ENCODE measurements at regions of chr1 and their contacts with region 1.

Region 1: DNA sequence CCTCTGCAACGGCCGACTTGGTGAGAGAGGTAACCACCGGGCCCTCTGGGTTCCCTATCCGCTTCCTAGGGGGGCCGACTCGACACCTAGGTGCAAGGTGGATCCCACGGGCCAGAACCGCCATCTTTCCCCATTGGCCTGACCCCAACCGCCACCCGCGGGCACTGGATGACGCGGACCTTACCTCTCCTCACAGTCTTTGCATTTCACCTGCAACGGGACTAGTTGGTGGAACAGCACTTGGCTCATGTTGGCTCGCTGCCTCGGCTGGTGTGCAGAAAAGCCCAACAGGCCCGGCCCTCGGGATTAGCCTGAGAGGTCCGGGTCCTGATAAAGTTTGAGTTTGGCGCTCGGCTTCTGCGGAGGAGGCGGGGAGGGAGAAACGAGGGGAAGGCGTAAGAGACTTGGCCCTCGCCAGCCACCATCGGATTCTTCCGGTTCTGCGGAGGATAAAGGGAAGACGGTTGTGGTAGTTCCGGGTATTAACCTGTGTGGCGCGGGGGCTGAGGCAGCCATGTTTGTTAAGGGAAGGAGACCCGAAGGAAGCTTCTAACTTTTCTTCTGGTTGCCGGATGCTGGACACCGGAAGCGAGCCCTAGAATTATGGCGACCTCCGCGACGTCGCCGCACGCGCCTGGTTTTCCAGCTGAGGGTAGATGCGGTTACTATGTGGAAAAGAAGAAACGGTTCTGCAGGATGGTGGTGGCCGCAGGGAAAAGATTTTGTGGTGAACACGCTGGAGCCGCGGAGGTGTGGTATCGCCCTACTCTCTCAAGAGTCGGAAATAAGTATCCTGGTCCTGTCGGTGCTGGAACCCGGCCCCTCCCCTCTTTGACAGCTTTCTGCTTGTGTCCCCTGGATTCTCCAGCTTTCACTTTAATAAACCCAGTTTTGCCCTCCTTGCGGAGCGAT is at the starts of genes SASS6 and TRMT13:
- DNase-seq: peak; percentile 73 to 96 (median 94)
- ATAC-seq: peak; percentile 99
- H3K4me3 ChIP-seq: peak within 1 kb of the TSS; percentile 92
- H3K4me3 Mint-ChIP-seq: peak within 1 kb of the TSS; percentile 90 to 99 (median 98)
- H3K27ac ChIP-seq: peak within 1 kb of the TSS; percentile 74
- H3K27ac Mint-ChIP-seq: peak within 1 kb of the TSS; percentile 86 to 99 (median 96)
- H3K4me1 ChIP-seq: peaks cover 9 to 15% of the 10 kb centered on the region in 2 donors
- H3K4me1 Mint-ChIP-seq: peaks cover 7 to 53% (median 39%) of the 10 kb centered on the region in 7 donors
- H3K27me3 ChIP-seq: no peaks in the 10 kb centered on the region
- H3K27me3 Mint-ChIP-seq: no peaks in the 10 kb centered on the region
- total RNA-seq, gene SASS6: 2.5 to 11.6 (median 5.6) TPM
- total RNA-seq, gene TRMT13: 15.3 to 60.3 (median 23.9) TPM

Region 2: DNA sequence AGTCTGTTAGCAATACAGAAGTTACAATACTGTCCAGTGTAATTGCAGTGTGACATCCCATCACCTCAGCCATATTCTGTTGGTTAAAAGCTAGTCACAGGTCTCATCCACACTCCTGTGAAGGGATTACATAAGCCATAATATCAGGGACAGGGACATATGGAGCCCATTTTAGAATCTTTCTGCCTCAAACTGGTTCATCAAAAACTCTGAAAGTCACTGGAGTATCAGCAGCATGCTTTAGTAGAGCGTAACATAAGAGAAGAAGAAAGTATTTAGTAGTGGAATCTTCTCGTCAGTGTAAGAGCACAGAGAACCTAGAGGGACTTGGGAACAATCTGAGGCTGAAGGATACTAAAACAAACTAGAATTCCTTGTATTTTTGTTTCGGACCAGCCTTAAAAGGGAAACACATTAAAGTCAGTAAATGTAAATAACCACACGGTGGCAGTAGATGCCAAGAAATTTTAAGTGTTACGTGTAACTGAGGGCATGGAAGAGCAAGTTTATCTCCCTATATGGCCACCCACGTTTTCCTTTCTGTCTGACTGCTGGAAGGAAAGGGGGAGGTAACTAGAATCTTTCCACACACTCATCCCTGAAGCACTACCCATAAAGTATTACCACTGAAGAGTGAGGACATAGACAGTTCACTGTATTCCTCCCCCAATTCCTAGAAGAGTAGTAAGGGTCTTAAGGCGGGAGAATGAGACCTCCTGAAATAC is 324.3 kb before region 1 on chr1:
- CTCF ChIA-PET with region 1: no interaction called
- POLR2A ChIA-PET with region 1: no interaction called
- intact Hi-C with region 1: loop called (anchors 2 to 10 kb)
- DNase-seq: peak in 7 of 9 donors; percentile 32 to 63 (median 55)
- ATAC-seq: peak; percentile 81
- H3K4me3 ChIP-seq: no peak overlapping the region
- H3K4me3 Mint-ChIP-seq: peak overlapping the region in 1 of 10 donors; percentile 16
- H3K27ac ChIP-seq: no peak overlapping the region
- H3K27ac Mint-ChIP-seq: no peak overlapping the region
- H3K4me1 ChIP-seq: no peaks in the 10 kb centered on the region
- H3K4me1 Mint-ChIP-seq: peaks cover 0 to 11% (median 4%) of the 10 kb centered on the region in 7 donors
- H3K27me3 ChIP-seq: no peaks in the 10 kb centered on the region
- H3K27me3 Mint-ChIP-seq: peaks cover 6 to 21% (median 8%) of the 10 kb centered on the region in 5 donors

Region 3: GRCh38 chr1:99969729-99970621 is 162.8 kb before region 1 on chr1 and contains the start of gene SLC35A3:
- CTCF ChIA-PET with region 1: interaction called, 3 read pairs
- POLR2A ChIA-PET with region 1: interaction called, 4 read pairs
- intact Hi-C with region 1: loop called (anchors 1 kb)
- DNase-seq: peak; percentile 69 to 85 (median 78)
- ATAC-seq: peak; percentile 89
- H3K4me3 ChIP-seq: peak within 1 kb of the TSS; percentile 75
- H3K4me3 Mint-ChIP-seq: peak within 1 kb of the TSS; percentile 96 to 100 (median 100)
- H3K27ac ChIP-seq: peak within 1 kb of the TSS; percentile 83
- H3K27ac Mint-ChIP-seq: peak within 1 kb of the TSS; percentile 91 to 99 (median 97)
- H3K4me1 ChIP-seq: peaks cover 6 to 20% of the 10 kb centered on the region in 2 donors
- H3K4me1 Mint-ChIP-seq: peaks cover 22 to 55% (median 40%) of the 10 kb centered on the region in 7 donors
- H3K27me3 ChIP-seq: no peaks in the 10 kb centered on the region
- H3K27me3 Mint-ChIP-seq: no peaks in the 10 kb centered on the region
- total RNA-seq, gene SLC35A3: 21.1 to 31.6 (median 27.3) TPM

Region 4: DNA sequence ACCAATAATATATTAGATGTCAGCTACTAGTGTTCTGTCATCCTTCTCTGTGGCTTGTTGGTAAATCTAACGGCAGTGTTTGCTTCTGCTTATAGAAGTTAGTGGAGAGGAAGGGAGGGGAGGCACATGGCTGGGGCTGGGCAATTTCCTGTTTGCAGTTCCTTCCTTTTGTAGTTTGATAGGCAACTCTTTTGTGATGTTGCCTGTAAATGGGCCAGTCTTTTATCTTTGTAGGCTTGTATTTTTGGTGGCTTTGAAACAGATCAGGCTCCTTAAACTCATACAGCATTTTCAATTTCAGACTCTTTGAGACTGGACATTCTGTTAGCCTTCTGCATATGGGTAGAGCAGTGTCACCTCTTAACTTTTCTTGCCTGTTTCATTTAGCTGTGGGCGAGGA is 267.6 kb after region 1 on chr1:
- CTCF ChIA-PET with region 1: interaction called, 3 read pairs
- POLR2A ChIA-PET with region 1: no interaction called
- intact Hi-C with region 1: loop called in 1 of 2 experiments (anchors 5 kb)
- DNase-seq: peak in 8 of 9 donors; percentile 23 to 89 (median 84)
- ATAC-seq: peak; percentile 87
- H3K4me3 ChIP-seq: peak overlapping the region; percentile 46
- H3K4me3 Mint-ChIP-seq: peak overlapping the region; percentile 69 to 89 (median 81)
- H3K27ac ChIP-seq: peak overlapping the region; percentile 72
- H3K27ac Mint-ChIP-seq: peak overlapping the region; percentile 83 to 98 (median 96)
- H3K4me1 ChIP-seq: peaks cover 77 to 87% of the 10 kb centered on the region in 2 donors
- H3K4me1 Mint-ChIP-seq: peaks cover 59 to 98% (median 86%) of the 10 kb centered on the region in 7 donors
- H3K27me3 ChIP-seq: no peaks in the 10 kb centered on the region
- H3K27me3 Mint-ChIP-seq: no peaks in the 10 kb centered on the region

Region 5: GRCh38 chr1:100530880-100531487 is 398.2 kb after region 1 on chr1:
- CTCF ChIA-PET with region 1: no interaction called
- POLR2A ChIA-PET with region 1: no interaction called
- intact Hi-C with region 1: loop called in 1 of 2 experiments (anchors 10 kb)
- DNase-seq: peak in 6 of 9 donors; percentile 8 to 46 (median 30)
- ATAC-seq: peak; percentile 94
- H3K4me3 ChIP-seq: peak overlapping the region; percentile 17
- H3K4me3 Mint-ChIP-seq: peak overlapping the region in 8 of 10 donors; percentile 20 to 61 (median 52)
- H3K27ac ChIP-seq: no peak overlapping the region
- H3K27ac Mint-ChIP-seq: peak overlapping the region; percentile 32 to 88 (median 51)
- H3K4me1 ChIP-seq: peaks cover 14 to 33% of the 10 kb centered on the region in 2 donors
- H3K4me1 Mint-ChIP-seq: peaks cover 28 to 36% (median 34%) of the 10 kb centered on the region in 7 donors
- H3K27me3 ChIP-seq: no peaks in the 10 kb centered on the region
- H3K27me3 Mint-ChIP-seq: peaks cover 3 to 30% (median 10%) of the 10 kb centered on the region in 5 donors

Region 6: GRCh38 chr1:100895540-100896483 is 763.0 kb after region 1 on chr1 and contains the start of gene SLC30A7:
- CTCF ChIA-PET with region 1: no interaction called
- POLR2A ChIA-PET with region 1: no interaction called
- intact Hi-C with region 1: loop called (anchors 1 kb)
- DNase-seq: peak; percentile 93 to 99 (median 94)
- ATAC-seq: peak; percentile 90
- H3K4me3 ChIP-seq: peak within 1 kb of the TSS; percentile 96
- H3K4me3 Mint-ChIP-seq: peak within 1 kb of the TSS; percentile 91 to 100 (median 99)
- H3K27ac ChIP-seq: peak within 1 kb of the TSS; percentile 95
- H3K27ac Mint-ChIP-seq: peak within 1 kb of the TSS; percentile 95 to 100 (median 99)
- H3K4me1 ChIP-seq: peaks cover 7 to 10% of the 10 kb centered on the region in 2 donors
- H3K4me1 Mint-ChIP-seq: peaks cover 17 to 58% (median 50%) of the 10 kb centered on the region in 7 donors
- H3K27me3 ChIP-seq: no peaks in the 10 kb centered on the region
- H3K27me3 Mint-ChIP-seq: no peaks in the 10 kb centered on the region
- total RNA-seq, gene SLC30A7: 29.9 to 44.5 (median 38.8) TPM